ENCODE measurements at regions of chr13 and their contacts with region 1.

Region 1: GRCh38 chr13:28324181-28324789 is 170.6 kb downstream of the FLT1 start:
- DNase-seq: peak; percentile 24
- ATAC-seq: peak; percentile 79
- H3K4me3 Mint-ChIP-seq: no peak overlapping the region
- H3K27ac Mint-ChIP-seq: no peak overlapping the region
- H3K4me1 Mint-ChIP-seq: peaks cover 5% of the 10 kb centered on the region
- H3K27me3 Mint-ChIP-seq: no peaks in the 10 kb centered on the region
- CTCF ChIP-seq: peak; percentile 50

Region 2: GRCh38 chr13:28251466-28251865 is 72.8 kb before region 1 on chr13:
- CTCF ChIA-PET with region 1: no interaction called
- POLR2A ChIA-PET with region 1: no interaction called
- intact Hi-C with region 1: no loop called
- DNase-seq: no peak
- ATAC-seq: no peak
- H3K4me3 Mint-ChIP-seq: peak overlapping the region; percentile 38
- H3K27ac Mint-ChIP-seq: peak overlapping the region; percentile 71
- H3K4me1 Mint-ChIP-seq: peaks cover 79% of the 10 kb centered on the region
- H3K27me3 Mint-ChIP-seq: no peaks in the 10 kb centered on the region
- CTCF ChIP-seq: no peak

Region 3: DNA sequence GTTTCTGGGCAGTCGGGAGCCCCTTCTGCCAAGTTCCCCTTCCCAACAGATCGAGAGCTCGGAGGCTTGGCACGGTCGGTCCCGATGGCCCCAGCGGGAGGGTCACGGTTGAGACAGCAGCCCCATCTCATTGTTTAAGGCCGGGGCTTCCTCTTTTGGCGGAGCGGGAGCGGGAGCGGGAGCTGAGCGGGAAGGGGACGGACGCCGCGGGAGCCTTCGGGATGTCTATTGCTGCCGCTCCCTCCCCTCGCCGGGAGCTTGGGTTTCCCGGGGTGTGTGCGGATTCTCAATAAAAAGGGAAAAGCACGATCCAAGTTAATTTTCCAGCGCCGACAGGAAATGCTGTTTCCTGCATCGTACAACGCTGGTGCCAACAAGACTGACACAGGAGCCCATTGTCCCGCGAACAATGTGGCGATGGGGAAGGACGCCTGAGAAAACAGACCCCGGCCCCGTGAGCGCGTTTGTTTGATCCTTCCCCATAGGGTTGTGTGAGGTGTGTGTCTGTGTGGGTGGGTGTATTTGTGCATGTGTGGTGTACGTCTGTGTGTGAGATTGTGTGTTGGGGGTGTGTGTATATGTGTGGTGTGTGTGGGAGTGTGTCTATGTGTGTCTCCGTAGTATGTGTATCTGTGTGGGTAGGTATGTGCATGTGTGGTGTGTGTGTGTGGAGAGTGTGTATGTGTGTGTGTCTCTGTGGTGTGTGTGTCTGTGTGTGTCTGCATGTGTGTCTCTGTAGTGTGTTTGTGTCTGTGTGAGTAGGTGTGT is 207.0 kb after region 1 on chr13:
- CTCF ChIA-PET with region 1: no interaction called
- POLR2A ChIA-PET with region 1: no interaction called
- intact Hi-C with region 1: loop called (anchors 5 kb)
- DNase-seq: no peak
- ATAC-seq: no peak
- H3K4me3 Mint-ChIP-seq: no peak overlapping the region
- H3K27ac Mint-ChIP-seq: no peak overlapping the region
- H3K4me1 Mint-ChIP-seq: peaks cover 30% of the 10 kb centered on the region
- H3K27me3 Mint-ChIP-seq: peaks cover 32% of the 10 kb centered on the region
- CTCF ChIP-seq: no peak

Region 4: GRCh38 chr13:28636674-28637317 is 312.5 kb after region 1 on chr13:
- CTCF ChIA-PET with region 1: interaction called, 50 read pairs
- POLR2A ChIA-PET with region 1: no interaction called
- intact Hi-C with region 1: loop called (anchors 1 kb)
- DNase-seq: no peak
- ATAC-seq: peak; percentile 74
- H3K4me3 Mint-ChIP-seq: peak overlapping the region; percentile 66
- H3K27ac Mint-ChIP-seq: peak overlapping the region; percentile 74
- H3K4me1 Mint-ChIP-seq: peaks cover 36% of the 10 kb centered on the region
- H3K27me3 Mint-ChIP-seq: no peaks in the 10 kb centered on the region
- CTCF ChIP-seq: no peak

Region 5: DNA sequence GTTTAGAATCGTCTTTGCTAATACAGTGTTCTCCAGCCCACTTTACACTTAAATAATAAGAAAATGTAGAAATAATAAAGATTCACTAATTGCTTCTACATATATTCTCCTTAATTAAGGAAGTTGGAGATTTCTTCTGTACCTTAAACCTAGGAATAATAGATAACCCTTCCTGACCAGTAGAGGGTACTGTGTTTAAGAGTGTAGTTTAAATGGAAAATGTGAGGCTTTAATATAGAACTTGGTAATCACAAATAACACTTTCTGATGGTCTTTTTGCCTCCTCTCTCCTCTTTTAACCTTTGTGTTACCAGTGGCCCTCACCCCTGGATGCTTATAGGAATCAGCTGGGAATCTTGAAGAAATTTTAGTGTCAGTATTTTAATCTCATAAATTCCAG is 355.3 kb after region 1 on chr13:
- CTCF ChIA-PET with region 1: interaction called, 3 read pairs
- POLR2A ChIA-PET with region 1: no interaction called
- intact Hi-C with region 1: loop called (anchors 2 kb)
- DNase-seq: no peak
- ATAC-seq: no peak
- H3K4me3 Mint-ChIP-seq: no peak overlapping the region
- H3K27ac Mint-ChIP-seq: no peak overlapping the region
- H3K4me1 Mint-ChIP-seq: no peaks in the 10 kb centered on the region
- H3K27me3 Mint-ChIP-seq: no peaks in the 10 kb centered on the region
- CTCF ChIP-seq: no peak

Region 6: GRCh38 chr13:28718543-28719226 is 394.4 kb after region 1 on chr13 and contains the start of gene SLC46A3:
- CTCF ChIA-PET with region 1: no interaction called
- POLR2A ChIA-PET with region 1: no interaction called
- intact Hi-C with region 1: loop called (anchors 2 kb)
- DNase-seq: peak; percentile 95
- ATAC-seq: peak; percentile 98
- H3K4me3 Mint-ChIP-seq: peak within 1 kb of the TSS; percentile 92
- H3K27ac Mint-ChIP-seq: peak within 1 kb of the TSS; percentile 92
- H3K4me1 Mint-ChIP-seq: peaks cover 23% of the 10 kb centered on the region
- H3K27me3 Mint-ChIP-seq: no peaks in the 10 kb centered on the region
- CTCF ChIP-seq: no peak
- total RNA-seq, gene SLC46A3: 8.6 and 11.8 TPM in 2 replicates

Region 7: DNA sequence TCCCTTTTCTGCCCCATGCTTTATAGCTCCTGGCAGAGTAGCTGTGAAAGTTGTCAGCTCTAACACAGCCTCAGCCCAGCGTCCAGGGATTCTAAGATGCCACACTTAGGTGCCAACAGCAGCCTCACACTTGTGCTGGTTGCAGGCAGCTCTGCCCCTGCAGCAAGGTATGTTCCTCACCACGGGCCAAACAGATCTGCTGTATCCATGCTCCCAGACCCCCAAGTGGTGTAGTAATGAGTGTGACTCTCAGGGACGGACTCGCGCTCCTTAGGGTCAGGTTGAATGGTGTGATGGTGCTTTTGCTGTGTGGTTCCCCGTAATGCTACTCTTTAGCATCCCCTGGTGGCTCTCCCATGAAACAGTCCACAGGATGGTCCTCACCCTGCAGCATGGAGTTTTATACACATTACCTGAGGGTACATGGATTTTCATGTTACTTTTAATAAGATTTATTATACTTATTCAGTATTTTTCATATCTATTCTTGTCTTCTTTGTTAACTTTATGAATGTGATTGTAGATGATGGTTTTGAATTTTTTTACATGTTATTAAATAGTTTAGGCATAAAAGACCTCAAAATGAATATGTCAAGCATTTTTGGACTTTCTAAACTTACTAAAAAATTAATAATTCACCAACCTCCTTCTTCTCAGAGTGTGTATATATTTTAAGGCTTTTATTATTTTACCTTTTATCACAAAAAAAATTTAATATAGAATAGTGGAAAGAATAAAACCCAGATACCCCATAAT is 1038.7 kb after region 1 on chr13:
- CTCF ChIA-PET with region 1: no interaction called
- POLR2A ChIA-PET with region 1: no interaction called
- intact Hi-C with region 1: loop called (anchors 2 kb)
- DNase-seq: no peak
- ATAC-seq: peak; percentile 78
- H3K4me3 Mint-ChIP-seq: no peak overlapping the region
- H3K27ac Mint-ChIP-seq: no peak overlapping the region
- H3K4me1 Mint-ChIP-seq: no peaks in the 10 kb centered on the region
- H3K27me3 Mint-ChIP-seq: peaks cover 6% of the 10 kb centered on the region
- CTCF ChIP-seq: no peak